ENCODE measurements at regions of chr1 and their contacts with region 1.

Region 1: GRCh38 chr1:63148825-63149645 is 173.3 kb upstream of the FOXD3 start:
- DNase-seq: peak; percentile 40
- H3K4me3 ChIP-seq: no peak overlapping the region
- H3K27ac ChIP-seq: no peak overlapping the region
- H3K4me1 ChIP-seq: no peaks in the 10 kb centered on the region
- H3K27me3 ChIP-seq: peaks cover 6 to 8% of the 10 kb centered on the region in 2 experiments
- CTCF ChIP-seq: peak; percentile 65 to 66
- POLR2A ChIP-seq: no peak

Region 2: DNA sequence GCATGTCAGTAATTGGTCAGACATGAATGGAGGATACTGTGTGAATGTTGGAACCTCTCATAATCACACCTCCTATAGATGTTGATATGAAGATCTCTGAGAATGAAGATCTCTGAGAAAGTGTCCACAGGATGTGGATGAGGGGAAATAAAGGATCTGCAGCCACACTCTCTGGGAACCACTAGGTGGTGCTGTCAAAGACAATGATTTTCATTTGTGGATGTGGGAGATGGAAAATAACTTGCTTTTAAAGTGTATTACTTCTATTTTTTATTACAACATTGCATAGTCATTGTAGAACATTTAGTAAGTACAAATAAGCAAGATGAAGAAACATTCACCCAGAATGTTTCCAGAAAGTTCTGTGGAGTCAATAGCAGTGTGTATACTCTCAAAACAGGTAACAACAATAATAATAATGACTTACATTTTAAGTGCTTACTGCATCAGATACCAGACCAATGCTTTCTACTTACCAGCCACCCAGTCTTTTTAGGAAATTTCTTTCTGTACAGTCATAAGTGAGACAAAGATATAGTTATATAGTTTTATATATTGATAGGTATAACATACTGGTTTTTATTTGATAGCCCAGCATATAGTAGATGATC is 236.9 kb before region 1 on chr1:
- CTCF ChIA-PET with region 1: interaction called, 7 read pairs
- POLR2A ChIA-PET with region 1: no interaction called
- dilution Hi-C with region 1: no loop called
- intact Hi-C with region 1: loop called (anchors 1 kb)
- DNase-seq: peak; percentile 39
- H3K4me3 ChIP-seq: no peak overlapping the region
- H3K27ac ChIP-seq: no peak overlapping the region
- H3K4me1 ChIP-seq: no peaks in the 10 kb centered on the region
- H3K27me3 ChIP-seq: peaks cover 1 to 10% of the 10 kb centered on the region in 2 experiments
- CTCF ChIP-seq: peak; percentile 61 to 67
- POLR2A ChIP-seq: no peak

Region 3: DNA sequence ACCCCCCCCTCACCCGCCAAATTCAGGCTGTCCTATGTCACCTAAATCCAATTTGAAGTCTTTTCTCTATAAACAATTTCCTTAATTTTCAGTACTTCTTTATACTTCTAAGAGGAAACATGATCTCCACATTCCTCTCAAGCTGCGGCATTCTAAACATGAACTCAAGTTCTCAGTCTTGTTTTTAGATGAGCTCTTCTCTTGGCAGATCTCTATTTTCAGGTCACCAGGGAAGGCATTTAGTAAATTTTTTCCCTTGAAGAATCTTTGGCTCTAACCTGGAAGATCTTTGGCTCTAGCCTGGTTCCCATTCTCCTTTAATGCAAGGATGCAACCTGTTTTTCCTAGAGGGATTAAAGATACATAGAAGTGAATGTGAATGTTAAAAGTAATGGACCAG is 171.7 kb before region 1 on chr1:
- CTCF ChIA-PET with region 1: interaction called, 11 read pairs
- POLR2A ChIA-PET with region 1: no interaction called
- dilution Hi-C with region 1: no loop called
- intact Hi-C with region 1: no loop called
- DNase-seq: no peak
- H3K4me3 ChIP-seq: no peak overlapping the region
- H3K27ac ChIP-seq: no peak overlapping the region
- H3K4me1 ChIP-seq: no peaks in the 10 kb centered on the region
- H3K27me3 ChIP-seq: peaks cover 0 to 6% of the 10 kb centered on the region in 2 experiments
- CTCF ChIP-seq: no peak
- POLR2A ChIP-seq: no peak

Region 4: GRCh38 chr1:63063367-63063766 is 85.7 kb before region 1 on chr1:
- CTCF ChIA-PET with region 1: interaction called, 3 read pairs
- POLR2A ChIA-PET with region 1: no interaction called
- dilution Hi-C with region 1: no loop called
- intact Hi-C with region 1: loop called (anchors 1 kb)
- DNase-seq: no peak
- H3K4me3 ChIP-seq: no peak overlapping the region
- H3K27ac ChIP-seq: no peak overlapping the region
- H3K4me1 ChIP-seq: no peaks in the 10 kb centered on the region
- H3K27me3 ChIP-seq: no peaks in the 10 kb centered on the region
- CTCF ChIP-seq: peak in 1 of 2 donors; percentile 4
- POLR2A ChIP-seq: no peak

Region 5: DNA sequence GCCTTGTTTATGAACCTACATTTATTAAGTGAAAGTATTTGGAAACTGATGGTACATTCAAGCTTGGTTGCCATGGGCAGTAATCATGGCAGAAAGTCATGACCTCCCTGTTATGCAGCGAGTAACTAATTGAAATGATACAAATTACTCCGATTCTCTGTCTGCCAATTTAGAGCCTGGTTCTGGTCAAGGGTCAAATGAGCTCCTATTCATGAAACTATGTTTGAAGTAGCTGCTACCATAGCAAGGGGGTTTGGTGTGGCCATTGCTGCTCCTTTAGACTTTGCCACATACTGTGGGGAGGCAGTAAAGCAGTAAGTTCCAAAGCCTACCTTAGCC is 13.9 kb before region 1 on chr1:
- CTCF ChIA-PET with region 1: interaction called, 28 read pairs
- POLR2A ChIA-PET with region 1: no interaction called
- dilution Hi-C with region 1: no loop called
- intact Hi-C with region 1: no loop called
- DNase-seq: no peak
- H3K4me3 ChIP-seq: no peak overlapping the region
- H3K27ac ChIP-seq: no peak overlapping the region
- H3K4me1 ChIP-seq: no peaks in the 10 kb centered on the region
- H3K27me3 ChIP-seq: peaks cover 1 to 12% of the 10 kb centered on the region in 2 experiments
- CTCF ChIP-seq: no peak
- POLR2A ChIP-seq: no peak